Head of caudate nucleus (tissue), 42 donors: ENCODE measurements at regions of chr2 and their contacts with region 1.

Region 1: DNA sequence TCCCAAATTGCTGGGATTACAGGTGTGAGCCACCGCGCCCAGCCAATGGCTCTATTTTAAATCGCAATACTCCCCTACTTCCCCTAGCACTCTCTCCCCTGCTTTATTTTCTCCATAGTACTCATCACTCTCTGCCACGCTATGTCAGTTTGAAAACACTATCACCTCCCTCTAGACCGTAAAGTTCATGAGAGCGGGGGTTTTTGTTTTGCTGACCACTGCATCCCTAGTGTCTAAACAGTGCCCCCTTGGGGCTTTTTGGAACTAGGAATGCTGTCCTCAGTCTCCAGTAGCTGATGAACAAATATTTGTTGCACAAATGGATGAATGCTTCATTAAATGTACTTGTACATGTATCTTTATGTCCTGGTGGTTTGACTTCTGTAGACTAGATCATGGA is 44.1 kb downstream of the ATOH8 start:
- DNase-seq: peak in 29 of 42 donors; percentile 26 to 87 (median 64)

Region 2: DNA sequence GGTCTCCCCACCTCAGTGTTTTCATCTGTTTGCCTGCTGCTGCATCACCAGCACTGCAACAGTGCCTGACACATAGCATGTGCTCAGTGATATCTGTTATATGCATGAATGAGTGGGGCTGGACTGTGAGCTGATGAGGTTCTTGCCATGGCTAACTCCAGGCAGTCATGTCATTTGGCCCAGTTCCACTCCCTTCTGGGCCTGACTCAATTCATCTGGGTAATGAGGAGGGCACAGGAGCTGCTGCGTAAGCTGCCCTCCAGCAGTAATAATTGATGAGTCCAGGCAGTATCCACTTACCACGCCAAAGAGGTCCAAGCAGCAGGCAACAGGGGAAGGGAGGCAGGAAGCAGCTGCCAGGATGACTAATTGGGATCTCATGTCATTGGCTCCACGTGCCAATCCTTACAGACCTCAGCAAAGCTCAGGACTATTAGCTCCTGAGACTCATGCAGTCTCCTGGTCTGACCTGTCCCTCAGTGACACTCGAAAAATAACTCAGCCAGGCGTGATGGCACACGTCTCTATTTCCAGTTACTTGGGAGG is 293.1 kb before region 1 on chr2:
- intact Hi-C with region 1: no loop called
- DNase-seq: peak in 7 of 42 donors; percentile 13 to 57 (median 29)

Region 3: DNA sequence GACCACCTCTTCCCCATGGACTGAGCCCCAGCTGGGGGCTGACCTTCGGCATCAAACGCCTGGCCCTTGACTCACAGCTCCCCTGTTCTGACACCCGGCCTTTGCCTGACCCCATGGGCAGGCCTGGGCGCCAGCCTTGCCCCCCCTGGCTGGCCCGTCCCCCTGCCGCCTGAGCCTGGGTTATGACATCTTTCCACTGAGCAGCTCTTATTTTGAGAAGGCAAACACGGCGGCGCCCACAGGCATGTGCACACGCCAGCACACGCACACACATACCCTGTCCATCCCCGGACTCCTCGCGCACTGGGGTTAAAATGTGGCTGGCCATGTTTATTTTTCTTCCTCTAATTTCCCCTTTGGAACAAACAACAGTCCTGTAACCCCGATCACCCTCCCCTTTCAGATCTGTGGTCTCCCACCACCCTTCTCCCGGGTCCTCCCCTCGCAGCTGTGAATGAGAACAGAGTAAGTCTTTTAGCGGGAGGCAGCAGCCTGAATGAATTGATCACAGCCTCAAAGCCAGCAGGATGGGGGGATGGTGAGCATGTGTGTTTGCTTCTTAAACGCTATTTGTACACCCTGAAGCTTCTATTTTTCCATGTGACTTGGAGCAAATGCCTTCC is 56.0 kb before region 1 on chr2:
- intact Hi-C with region 1: loop called (anchors 5 kb)
- DNase-seq: peak; percentile 55 to 92 (median 80)